T-cell (primary cell): ENCODE measurements at regions of chrX and their contacts with region 1.

Region 1: DNA sequence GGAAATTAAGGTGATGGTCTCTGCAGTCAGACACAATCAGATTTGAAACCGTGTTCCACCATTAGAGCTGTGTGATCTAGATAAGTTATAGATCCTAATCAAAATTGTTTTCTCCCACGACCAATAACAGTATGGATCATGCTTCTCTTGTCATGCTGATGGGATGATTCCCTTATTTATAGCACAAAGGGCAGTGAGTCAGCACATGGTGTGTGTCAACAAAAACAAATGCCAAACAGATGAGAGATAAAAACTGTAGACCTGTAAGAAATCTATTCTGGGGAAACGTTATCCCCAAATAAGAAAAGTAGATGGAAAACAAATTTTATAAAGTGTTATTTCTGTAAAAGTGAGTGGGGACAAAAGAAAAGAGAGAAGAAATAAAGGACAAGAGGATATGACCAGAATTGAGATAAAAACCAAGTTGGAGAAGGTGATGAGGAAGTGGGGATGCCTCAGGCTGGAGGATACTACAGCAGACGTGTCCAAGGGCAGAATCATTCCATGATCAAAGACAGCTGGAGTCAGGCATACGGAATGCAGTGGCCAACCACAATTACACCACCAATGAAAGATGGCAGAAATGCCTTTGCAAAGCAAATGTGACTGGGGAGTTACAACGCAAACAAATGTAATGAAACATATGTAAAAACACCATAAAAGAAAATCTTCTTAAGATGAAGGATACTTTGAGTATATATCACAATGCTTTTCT is 377.8 kb upstream of the PRKX start:
- DNase-seq: no peak
- ATAC-seq: no peak
- H3K4me3 ChIP-seq: no peak overlapping the region
- H3K4me3 Mint-ChIP-seq: no peak overlapping the region
- H3K27ac ChIP-seq: no peak overlapping the region
- H3K27ac Mint-ChIP-seq: no peak overlapping the region
- H3K4me1 ChIP-seq: no peaks in the 10 kb centered on the region
- H3K4me1 Mint-ChIP-seq: no peaks in the 10 kb centered on the region
- H3K27me3 ChIP-seq: no peaks in the 10 kb centered on the region
- H3K27me3 Mint-ChIP-seq: no peaks in the 10 kb centered on the region

Region 2: GRCh38 chrX:3699821-3700381 is 391.3 kb before region 1 on chrX:
- CTCF ChIA-PET with region 1: interaction called in 1 of 2 experiments, 10 read pairs
- POLR2A ChIA-PET with region 1: no interaction called
- DNase-seq: peak in 5 of 35 experiments; percentile 21 to 31 (median 24)
- ATAC-seq: peak; percentile 50 to 82 (median 72)
- H3K4me3 ChIP-seq: peak overlapping the region; percentile 46 to 49
- H3K4me3 Mint-ChIP-seq: peak overlapping the region; percentile 84 to 89 (median 85)
- H3K27ac ChIP-seq: peak overlapping the region; percentile 86
- H3K27ac Mint-ChIP-seq: peak overlapping the region; percentile 96 to 99
- H3K4me1 ChIP-seq: peaks cover 5 to 32% of the 10 kb centered on the region in 2 experiments
- H3K4me1 Mint-ChIP-seq: peaks cover 71 to 83% (median 76%) of the 10 kb centered on the region in 3 donors
- H3K27me3 ChIP-seq: no peaks in the 10 kb centered on the region
- H3K27me3 Mint-ChIP-seq: no peaks in the 10 kb centered on the region